Activated T-helper 1 cell treated with anti-CD3 and anti-CD28 coated beads, Interleukin-12 subunit alpha, Interleukin-12 subunit beta, Interleukin-2, Interleukin-4 antibody, amounts not matched to agents 30 ng/mL and 10 ng/mL and 1 ng/mL, durations not matched to agents 14 hours and 24 hours and 36 hours (primary cell): ENCODE measurements at regions of chr14 and their contacts with region 1.

Region 1: GRCh38 chr14:73173092-73173735 is 36.9 kb downstream of the PSEN1 start:
- DNase-seq: no peak
- H3K4me3 Mint-ChIP-seq: no peak overlapping the region
- H3K27ac Mint-ChIP-seq: no peak overlapping the region
- H3K4me1 Mint-ChIP-seq: no peaks in the 10 kb centered on the region
- H3K27me3 Mint-ChIP-seq: no peaks in the 10 kb centered on the region

Region 2: GRCh38 chr14:73125169-73125588 is 48.0 kb before region 1 on chr14:
- intact Hi-C with region 1: no loop called
- DNase-seq: no peak
- H3K4me3 Mint-ChIP-seq: no peak overlapping the region
- H3K27ac Mint-ChIP-seq: no peak overlapping the region
- H3K4me1 Mint-ChIP-seq: no peaks in the 10 kb centered on the region
- H3K27me3 Mint-ChIP-seq: no peaks in the 10 kb centered on the region

Region 3: DNA sequence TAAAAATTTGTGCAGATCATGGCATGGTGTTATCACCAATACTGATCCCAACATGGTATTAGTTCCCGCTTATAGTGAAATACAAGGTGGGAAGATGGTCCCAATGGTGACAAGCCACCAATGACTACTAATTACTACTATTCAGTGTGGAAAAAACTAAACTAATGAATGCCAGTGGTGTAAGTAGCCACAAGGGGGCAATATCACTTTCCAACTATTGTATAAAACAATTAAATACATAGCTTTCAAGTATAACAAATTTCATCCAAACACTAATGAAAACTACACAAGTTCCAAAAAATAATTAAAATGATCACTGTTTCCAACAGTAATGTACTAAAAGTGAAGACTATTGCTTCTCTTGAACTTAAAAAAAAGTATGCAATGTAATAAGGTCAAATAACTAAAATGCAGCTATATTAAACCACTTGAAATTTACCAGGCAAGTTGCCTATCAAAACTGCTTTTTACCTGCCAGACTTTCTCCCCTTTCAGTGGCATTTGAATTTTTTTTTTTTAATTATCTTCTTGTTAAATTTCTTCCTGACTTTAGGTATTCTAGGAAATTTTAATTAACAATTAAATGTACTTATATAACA is 122.1 kb after region 1 on chr14:
- intact Hi-C with region 1: loop called (anchors 2 kb)
- DNase-seq: no peak
- H3K4me3 Mint-ChIP-seq: no peak overlapping the region
- H3K27ac Mint-ChIP-seq: no peak overlapping the region
- H3K4me1 Mint-ChIP-seq: peaks cover 33% of the 10 kb centered on the region
- H3K27me3 Mint-ChIP-seq: no peaks in the 10 kb centered on the region

Region 4: GRCh38 chr14:73472185-73473114 is 299.2 kb after region 1 on chr14:
- intact Hi-C with region 1: loop called (anchors 1 kb)
- DNase-seq: no peak
- H3K4me3 Mint-ChIP-seq: no peak overlapping the region
- H3K27ac Mint-ChIP-seq: no peak overlapping the region
- H3K4me1 Mint-ChIP-seq: peaks cover 25% of the 10 kb centered on the region
- H3K27me3 Mint-ChIP-seq: peaks cover 4% of the 10 kb centered on the region

Region 5: GRCh38 chr14:73633116-73634010 is 460.1 kb after region 1 on chr14:
- intact Hi-C with region 1: loop called (anchors 1 kb)
- DNase-seq: peak; percentile 40
- H3K4me3 Mint-ChIP-seq: peak overlapping the region; percentile 53
- H3K27ac Mint-ChIP-seq: no peak overlapping the region
- H3K4me1 Mint-ChIP-seq: peaks cover 6% of the 10 kb centered on the region
- H3K27me3 Mint-ChIP-seq: peaks cover 41% of the 10 kb centered on the region